IMR-90 (cell line): ENCODE measurements at regions of chr6 and their contacts with region 1.

Region 1: GRCh38 chr6:10954590-10955010 is 67.7 kb downstream of the SYCP2L start:
- DNase-seq: peak; percentile 77
- ATAC-seq: peak; percentile 65
- H3K4me3 ChIP-seq: no peak overlapping the region
- H3K27ac ChIP-seq: no peak overlapping the region
- H3K4me1 ChIP-seq: peaks cover 3% of the 10 kb centered on the region; the same call in 1 of the 2 replicates
- H3K27me3 ChIP-seq: peaks cover 9% of the 10 kb centered on the region
- CTCF ChIP-seq: peak; percentile 81
- POLR2A ChIP-seq: no peak
- RAD21 ChIP-seq: peak; percentile 87

Region 2: GRCh38 chr6:10655508-10656055 is 299.0 kb before region 1 on chr6:
- CTCF ChIA-PET with region 1: no interaction called
- POLR2A ChIA-PET with region 1: no interaction called
- dilution Hi-C with region 1: no loop called
- in situ Hi-C with region 1: no loop called
- intact Hi-C with region 1: no loop called
- DNase-seq: no peak
- ATAC-seq: no peak
- H3K4me3 ChIP-seq: no peak overlapping the region
- H3K27ac ChIP-seq: no peak overlapping the region
- H3K4me1 ChIP-seq: no peaks in the 10 kb centered on the region
- H3K27me3 ChIP-seq: no peaks in the 10 kb centered on the region; the same call in 1 of the 2 replicates
- CTCF ChIP-seq: no peak
- POLR2A ChIP-seq: no peak
- RAD21 ChIP-seq: no peak

Region 3: DNA sequence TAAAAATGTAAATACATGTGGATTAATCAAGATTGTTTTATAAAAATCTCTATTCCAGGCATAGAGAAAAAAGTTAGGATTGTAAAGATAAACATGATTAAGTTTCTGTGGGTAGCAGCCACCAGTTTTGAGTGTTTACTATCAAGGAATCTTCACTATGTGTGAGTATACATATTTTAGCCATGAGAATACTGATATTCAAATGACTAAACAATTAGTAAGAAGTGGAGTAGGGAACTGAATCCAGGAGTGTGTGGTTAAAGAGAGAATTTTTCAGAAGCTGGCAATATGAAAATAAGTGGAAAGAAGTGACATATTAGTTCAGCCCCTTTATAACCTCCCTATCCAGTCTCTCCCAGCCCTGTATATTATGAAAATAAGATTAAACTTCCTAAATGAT is 79.2 kb after region 1 on chr6:
- CTCF ChIA-PET with region 1: interaction called, 8 read pairs
- POLR2A ChIA-PET with region 1: interaction called, 11 read pairs
- dilution Hi-C with region 1: no loop called
- in situ Hi-C with region 1: no loop called
- intact Hi-C with region 1: no loop called
- DNase-seq: peak; percentile 90
- ATAC-seq: peak; percentile 92
- H3K4me3 ChIP-seq: no peak overlapping the region
- H3K27ac ChIP-seq: no peak overlapping the region
- H3K4me1 ChIP-seq: peaks cover 6% of the 10 kb centered on the region
- H3K27me3 ChIP-seq: no peaks in the 10 kb centered on the region
- CTCF ChIP-seq: no peak
- POLR2A ChIP-seq: no peak
- RAD21 ChIP-seq: no peak

Region 4: GRCh38 chr6:11043961-11044711 is 89.5 kb after region 1 on chr6 and contains the start of gene ELOVL2:
- CTCF ChIA-PET with region 1: interaction called, 3 read pairs
- POLR2A ChIA-PET with region 1: no interaction called
- dilution Hi-C with region 1: no loop called
- in situ Hi-C with region 1: no loop called
- intact Hi-C with region 1: loop called (anchors 1 kb)
- DNase-seq: peak; percentile 61
- ATAC-seq: peak; percentile 92
- H3K4me3 ChIP-seq: peak within 1 kb of the TSS; percentile 74
- H3K27ac ChIP-seq: peak within 1 kb of the TSS; percentile 54
- H3K4me1 ChIP-seq: peaks cover 3% of the 10 kb centered on the region
- H3K27me3 ChIP-seq: no peaks in the 10 kb centered on the region
- CTCF ChIP-seq: peak; percentile 99
- POLR2A ChIP-seq: no peak
- RAD21 ChIP-seq: peak; percentile 56
- total RNA-seq, gene ELOVL2: 7.9 and 10.6 TPM in 2 replicates

Region 5: DNA sequence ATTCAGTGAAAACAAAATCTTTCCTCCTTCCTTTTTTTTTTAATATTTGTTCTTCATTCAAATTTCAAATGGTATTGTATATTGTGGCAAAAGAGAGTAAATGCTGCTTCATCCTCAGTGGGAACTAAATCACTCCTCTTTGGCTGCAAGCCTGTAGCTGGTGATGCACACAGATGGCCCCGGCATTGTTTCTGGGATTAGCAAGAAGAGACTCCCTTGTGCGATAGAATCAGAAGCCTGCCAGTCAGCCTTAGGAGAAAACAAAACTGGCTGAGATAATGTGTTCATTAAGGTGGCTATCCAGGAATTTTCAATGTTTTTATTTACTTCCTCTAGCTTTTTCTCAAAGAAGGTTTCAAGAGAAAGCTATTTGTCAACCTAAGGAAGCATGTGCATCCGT is 110.2 kb after region 1 on chr6:
- CTCF ChIA-PET with region 1: interaction called, 13 read pairs
- POLR2A ChIA-PET with region 1: interaction called, 3 read pairs
- dilution Hi-C with region 1: no loop called
- in situ Hi-C with region 1: loop called (anchors 5 kb)
- intact Hi-C with region 1: loop called (anchors 1 kb)
- DNase-seq: no peak
- ATAC-seq: no peak
- H3K4me3 ChIP-seq: no peak overlapping the region
- H3K27ac ChIP-seq: no peak overlapping the region
- H3K4me1 ChIP-seq: no peaks in the 10 kb centered on the region
- H3K27me3 ChIP-seq: peaks cover 9% of the 10 kb centered on the region
- CTCF ChIP-seq: no peak
- POLR2A ChIP-seq: no peak
- RAD21 ChIP-seq: no peak

Region 6: DNA sequence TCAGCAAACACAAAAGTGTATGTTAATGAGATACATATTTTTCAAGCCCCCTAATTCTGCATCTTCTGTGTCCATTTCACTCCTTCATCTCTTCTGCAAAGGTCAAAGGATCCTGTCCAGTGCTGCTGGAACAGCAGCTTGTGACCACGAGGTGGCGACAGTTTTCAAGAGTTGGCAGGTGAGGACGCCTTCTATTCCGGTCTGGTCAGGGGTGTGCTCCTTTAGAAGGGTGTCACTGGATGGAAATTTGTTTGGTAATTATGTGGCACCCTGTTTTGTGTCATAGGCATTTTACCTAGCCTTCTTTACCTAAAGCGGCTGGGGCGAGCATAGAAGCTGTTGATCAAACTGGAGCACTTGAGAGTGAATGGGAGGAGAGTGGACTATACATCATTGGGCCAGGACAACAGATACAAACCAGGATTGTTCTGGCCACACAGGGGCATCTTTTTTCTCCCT is 189.8 kb after region 1 on chr6:
- CTCF ChIA-PET with region 1: no interaction called
- POLR2A ChIA-PET with region 1: no interaction called
- dilution Hi-C with region 1: no loop called
- in situ Hi-C with region 1: no loop called
- intact Hi-C with region 1: loop called (anchors 2 kb)
- DNase-seq: peak; percentile 72
- ATAC-seq: peak; percentile 76
- H3K4me3 ChIP-seq: no peak overlapping the region
- H3K27ac ChIP-seq: no peak overlapping the region
- H3K4me1 ChIP-seq: peaks cover 4% of the 10 kb centered on the region; the same call in 1 of the 2 replicates
- H3K27me3 ChIP-seq: no peaks in the 10 kb centered on the region
- CTCF ChIP-seq: peak; percentile 88
- POLR2A ChIP-seq: 0 out of 2 replicates have a peak, but pooled peaks have one; percentile 49
- RAD21 ChIP-seq: peak; percentile 96

Region 7: DNA sequence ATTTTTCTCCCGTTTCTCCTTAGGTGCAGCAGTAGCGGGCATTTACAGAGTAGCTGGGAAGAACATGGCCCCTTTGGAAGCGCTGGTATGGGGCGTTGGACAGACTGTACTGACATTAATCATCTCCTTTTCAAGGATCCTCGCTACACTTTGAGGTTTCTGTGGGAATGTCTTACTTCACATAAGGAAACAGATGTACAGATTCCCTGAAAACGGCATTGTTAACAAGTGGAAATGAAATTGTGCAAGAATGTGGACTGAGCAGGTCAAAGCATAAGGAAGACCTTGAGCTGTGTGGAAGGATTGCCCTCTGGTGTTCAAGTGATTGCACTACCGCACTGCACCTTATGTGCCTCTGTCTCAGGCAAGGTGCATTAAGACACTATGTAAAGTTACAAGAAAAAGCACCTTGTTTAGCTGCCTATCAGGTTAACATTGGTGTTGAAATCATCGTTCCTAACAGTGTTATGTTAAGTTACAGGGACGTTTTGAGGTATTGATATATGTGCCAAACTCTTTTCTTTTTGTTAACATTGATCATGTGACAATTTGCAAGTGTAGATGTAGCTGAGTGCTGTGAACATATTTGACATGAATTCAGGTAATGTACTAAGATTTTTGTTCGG is 620.9 kb after region 1 on chr6:
- CTCF ChIA-PET with region 1: interaction called, 4 read pairs
- POLR2A ChIA-PET with region 1: no interaction called
- dilution Hi-C with region 1: no loop called
- in situ Hi-C with region 1: loop called (anchors 10 kb)
- intact Hi-C with region 1: loop called (anchors 1 kb)
- DNase-seq: peak; percentile 84
- ATAC-seq: peak; percentile 100
- H3K4me3 ChIP-seq: no peak overlapping the region
- H3K27ac ChIP-seq: no peak overlapping the region
- H3K4me1 ChIP-seq: no peaks in the 10 kb centered on the region
- H3K27me3 ChIP-seq: no peaks in the 10 kb centered on the region
- CTCF ChIP-seq: peak; percentile 90
- POLR2A ChIP-seq: no peak
- RAD21 ChIP-seq: peak; percentile 94